Sigmoid colon (tissue), 7 donors: ENCODE measurements at regions of chr5 and their contacts with region 1.

Region 1: GRCh38 chr5:149433524-149434131 is 54.5 kb upstream of the IL17B start:
- DNase-seq: peak; percentile 91
- H3K4me3 ChIP-seq: no peak overlapping the region
- H3K27ac ChIP-seq: peak overlapping the region; percentile 74 to 98 (median 96)
- H3K4me1 ChIP-seq: peaks cover 3 to 41% (median 37%) of the 10 kb centered on the region in 4 donors
- H3K27me3 ChIP-seq: no peaks in the 10 kb centered on the region
- CTCF ChIP-seq: no peak
- EP300 ChIP-seq: no peak
- POLR2A ChIP-seq: peak; percentile 5 to 46

Region 2: GRCh38 chr5:149381987-149382340 is 51.7 kb before region 1 on chr5:
- intact Hi-C with region 1: loop called (anchors 1 kb)
- DNase-seq: peak; percentile 94
- H3K4me3 ChIP-seq: peak overlapping the region; percentile 21 to 55 (median 44)
- H3K27ac ChIP-seq: peak overlapping the region; percentile 93 to 99 (median 98)
- H3K4me1 ChIP-seq: peaks cover 0 to 90% (median 84%) of the 10 kb centered on the region in 4 donors
- H3K27me3 ChIP-seq: no peaks in the 10 kb centered on the region
- CTCF ChIP-seq: peak in 3 of 4 experiments; percentile 92 to 96 (median 95)
- EP300 ChIP-seq: peak in 2 of 4 donors; percentile 31 to 47
- POLR2A ChIP-seq: no peak

Region 3: DNA sequence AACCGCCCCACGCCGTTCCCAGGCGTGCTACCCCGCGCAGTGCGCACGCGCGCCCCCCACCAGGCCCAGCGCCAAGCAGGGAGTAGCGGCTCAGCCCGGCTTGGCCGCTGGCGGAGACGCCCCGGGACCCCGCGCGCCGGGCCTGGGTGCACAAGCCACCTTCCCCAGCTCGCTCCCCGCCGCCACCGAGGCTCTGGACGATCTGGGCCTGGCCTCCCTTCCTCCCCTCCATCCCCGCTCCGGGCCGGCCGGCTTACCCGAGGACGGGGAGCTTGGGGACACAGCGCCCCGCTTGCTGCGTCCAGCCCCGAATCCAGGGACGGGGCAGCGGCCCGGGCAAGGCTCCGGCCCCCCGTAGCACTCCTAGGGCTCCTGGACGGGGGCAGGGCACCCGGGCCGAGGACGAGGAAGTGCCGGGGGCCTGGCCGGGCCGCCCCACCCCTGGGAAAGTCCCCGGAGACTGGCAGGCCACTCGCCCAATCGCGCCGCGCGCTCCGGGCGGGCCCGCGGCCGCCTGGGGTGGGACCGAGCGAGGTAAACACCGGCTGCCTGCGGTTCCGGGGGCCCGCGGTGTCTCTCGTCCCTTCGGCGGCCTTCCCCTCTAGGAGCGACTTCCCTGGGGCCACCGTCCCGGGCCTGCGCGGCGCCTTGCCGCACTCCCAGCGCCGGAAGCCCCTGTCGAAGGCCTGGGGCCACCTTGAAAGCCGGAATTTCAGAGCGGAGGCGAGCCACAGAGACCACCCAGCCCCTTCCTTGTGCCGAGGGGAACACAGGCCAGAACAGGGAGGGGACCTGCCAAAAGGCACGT is 1647.2 kb after region 1 on chr5 and contains the start of gene TNIP1:
- intact Hi-C with region 1: no loop called
- DNase-seq: peak; percentile 97
- H3K4me3 ChIP-seq: peak within 1 kb of the TSS; percentile 66 to 85 (median 74)
- H3K27ac ChIP-seq: peak within 1 kb of the TSS; percentile 92 to 99 (median 98)
- H3K4me1 ChIP-seq: peaks cover 0 to 52% (median 37%) of the 10 kb centered on the region in 4 donors
- H3K27me3 ChIP-seq: no peaks in the 10 kb centered on the region
- CTCF ChIP-seq: no peak
- EP300 ChIP-seq: no peak
- POLR2A ChIP-seq: peak in 1 of 2 donors; percentile 57
- total RNA-seq, gene TNIP1: 55.1 to 73.1 (median 62.8) TPM